ENCODE measurements at regions of chr5 and their contacts with region 1.

Region 1: DNA sequence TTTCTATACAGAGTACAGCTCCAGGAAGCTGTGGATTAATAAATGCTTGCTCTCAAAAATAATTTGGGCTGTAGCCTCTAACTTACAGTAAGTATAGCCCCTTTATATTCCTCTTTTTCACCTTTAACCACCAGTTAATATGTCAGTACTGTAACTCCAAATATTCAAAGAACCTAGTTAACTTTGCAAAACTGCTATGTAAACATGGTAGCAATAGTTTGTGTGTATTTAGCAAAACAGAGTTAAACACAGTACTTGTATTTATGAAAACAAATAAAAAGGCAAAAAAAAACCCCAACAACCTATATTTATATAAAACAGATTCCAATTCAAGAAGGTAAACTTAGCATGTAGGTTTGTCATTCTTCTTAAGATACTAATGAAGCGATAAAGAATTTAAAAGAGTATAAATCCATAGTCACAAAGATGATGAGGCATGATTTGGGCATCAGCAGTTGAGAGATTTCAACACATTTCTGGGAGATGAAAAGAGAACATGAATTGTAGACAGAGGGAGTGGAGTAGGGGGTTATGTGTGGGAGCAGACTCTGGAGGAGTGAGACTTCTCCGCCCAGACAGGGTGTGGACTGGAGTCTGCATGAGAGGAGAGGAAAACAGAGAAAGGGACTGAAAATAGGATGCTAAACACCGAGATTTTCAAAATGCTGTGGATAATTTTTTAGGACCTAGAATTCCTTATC is 47.0 kb upstream of the F2RL1 start:
- DNase-seq: no peak
- H3K4me3 Mint-ChIP-seq: no peak overlapping the region
- H3K27ac Mint-ChIP-seq: no peak overlapping the region
- H3K4me1 Mint-ChIP-seq: peaks cover 4% of the 10 kb centered on the region
- H3K27me3 Mint-ChIP-seq: no peaks in the 10 kb centered on the region

Region 2: GRCh38 chr5:76451031-76451701 is 320.7 kb before region 1 on chr5:
- CTCF ChIA-PET with region 1: no interaction called
- POLR2A ChIA-PET with region 1: no interaction called
- intact Hi-C with region 1: no loop called
- DNase-seq: no peak
- H3K4me3 Mint-ChIP-seq: no peak overlapping the region
- H3K27ac Mint-ChIP-seq: peak overlapping the region; percentile 31
- H3K4me1 Mint-ChIP-seq: peaks cover 49% of the 10 kb centered on the region
- H3K27me3 Mint-ChIP-seq: no peaks in the 10 kb centered on the region

Region 3: GRCh38 chr5:76641514-76642120 is 130.2 kb before region 1 on chr5:
- CTCF ChIA-PET with region 1: interaction called, 17 read pairs
- POLR2A ChIA-PET with region 1: no interaction called
- intact Hi-C with region 1: loop called (anchors 10 kb)
- DNase-seq: peak; percentile 77
- H3K4me3 Mint-ChIP-seq: no peak overlapping the region
- H3K27ac Mint-ChIP-seq: no peak overlapping the region
- H3K4me1 Mint-ChIP-seq: peaks cover 4% of the 10 kb centered on the region
- H3K27me3 Mint-ChIP-seq: no peaks in the 10 kb centered on the region

Region 4: GRCh38 chr5:76679231-76679630 is 92.6 kb before region 1 on chr5:
- CTCF ChIA-PET with region 1: interaction called, 15 read pairs
- POLR2A ChIA-PET with region 1: no interaction called
- intact Hi-C with region 1: no loop called
- DNase-seq: no peak
- H3K4me3 Mint-ChIP-seq: no peak overlapping the region
- H3K27ac Mint-ChIP-seq: no peak overlapping the region
- H3K4me1 Mint-ChIP-seq: peaks cover 14% of the 10 kb centered on the region
- H3K27me3 Mint-ChIP-seq: no peaks in the 10 kb centered on the region

Region 5: GRCh38 chr5:76715736-76716455 is 56.0 kb before region 1 on chr5 and contains the start of gene F2R:
- CTCF ChIA-PET with region 1: interaction called, 61 read pairs
- POLR2A ChIA-PET with region 1: no interaction called
- intact Hi-C with region 1: loop called (anchors 1 kb)
- DNase-seq: peak; percentile 65
- H3K4me3 Mint-ChIP-seq: peak within 1 kb of the TSS; percentile 81
- H3K27ac Mint-ChIP-seq: peak within 1 kb of the TSS; percentile 54
- H3K4me1 Mint-ChIP-seq: peaks cover 37% of the 10 kb centered on the region
- H3K27me3 Mint-ChIP-seq: peaks cover 30% of the 10 kb centered on the region
- total RNA-seq, gene F2R: 6.5 to 6.8 TPM

Region 6: GRCh38 chr5:76782444-76782843 is 10.6 kb after region 1 on chr5:
- CTCF ChIA-PET with region 1: interaction called, 13 read pairs
- POLR2A ChIA-PET with region 1: no interaction called
- intact Hi-C with region 1: no loop called
- DNase-seq: no peak
- H3K4me3 Mint-ChIP-seq: no peak overlapping the region
- H3K27ac Mint-ChIP-seq: no peak overlapping the region
- H3K4me1 Mint-ChIP-seq: no peaks in the 10 kb centered on the region
- H3K27me3 Mint-ChIP-seq: no peaks in the 10 kb centered on the region